ENCODE measurements at regions of chr5 and their contacts with region 1.

Region 1: GRCh38 chr5:68661237-68661636 is 432.6 kb upstream of the SLC30A5 start:
- DNase-seq: peak; percentile 16 to 40 (median 26)
- ATAC-seq: peak; percentile 93
- H3K4me3 ChIP-seq: no peak overlapping the region
- H3K27ac ChIP-seq: no peak overlapping the region
- H3K4me1 ChIP-seq: no peaks in the 10 kb centered on the region
- H3K27me3 ChIP-seq: peaks cover 0 to 7% of the 10 kb centered on the region in 2 experiments; a peak in 2 of 5 replicates
- CTCF ChIP-seq: peak; percentile 49 to 61 (median 51); a peak in 5 of 6 replicates
- EP300 ChIP-seq: no peak
- POLR2A ChIP-seq: no peak
- RAD21 ChIP-seq: peak; percentile 11 to 52; a peak in 2 of 4 replicates

Region 2: GRCh38 chr5:68215208-68215897 is 445.9 kb before region 1 on chr5 and contains the start of gene PIK3R1:
- CTCF ChIA-PET with region 1: no interaction called
- POLR2A ChIA-PET with region 1: no interaction called
- in situ Hi-C with region 1: no loop called
- intact Hi-C with region 1: no loop called
- DNase-seq: peak; percentile 93 to 95 (median 94)
- ATAC-seq: peak; percentile 95
- H3K4me3 ChIP-seq: peak within 1 kb of the TSS; percentile 83
- H3K27ac ChIP-seq: peak within 1 kb of the TSS; percentile 72
- H3K4me1 ChIP-seq: peaks cover 9 to 16% of the 10 kb centered on the region in 2 experiments; a peak in 3 of 5 replicates
- H3K27me3 ChIP-seq: no peaks in the 10 kb centered on the region; a peak in 1 of 5 replicates
- CTCF ChIP-seq: peak in 2 of 3 experiments; percentile 32 to 44; a peak in 2 of 6 replicates
- EP300 ChIP-seq: no peak
- POLR2A ChIP-seq: peak; percentile 62; the same call in 1 of the 2 replicates
- RAD21 ChIP-seq: peak in 1 of 2 experiments; percentile 4; a peak in 1 of 4 replicates
- polyA plus RNA-seq, gene PIK3R1: 1.1 to 1.8 TPM

Region 3: DNA sequence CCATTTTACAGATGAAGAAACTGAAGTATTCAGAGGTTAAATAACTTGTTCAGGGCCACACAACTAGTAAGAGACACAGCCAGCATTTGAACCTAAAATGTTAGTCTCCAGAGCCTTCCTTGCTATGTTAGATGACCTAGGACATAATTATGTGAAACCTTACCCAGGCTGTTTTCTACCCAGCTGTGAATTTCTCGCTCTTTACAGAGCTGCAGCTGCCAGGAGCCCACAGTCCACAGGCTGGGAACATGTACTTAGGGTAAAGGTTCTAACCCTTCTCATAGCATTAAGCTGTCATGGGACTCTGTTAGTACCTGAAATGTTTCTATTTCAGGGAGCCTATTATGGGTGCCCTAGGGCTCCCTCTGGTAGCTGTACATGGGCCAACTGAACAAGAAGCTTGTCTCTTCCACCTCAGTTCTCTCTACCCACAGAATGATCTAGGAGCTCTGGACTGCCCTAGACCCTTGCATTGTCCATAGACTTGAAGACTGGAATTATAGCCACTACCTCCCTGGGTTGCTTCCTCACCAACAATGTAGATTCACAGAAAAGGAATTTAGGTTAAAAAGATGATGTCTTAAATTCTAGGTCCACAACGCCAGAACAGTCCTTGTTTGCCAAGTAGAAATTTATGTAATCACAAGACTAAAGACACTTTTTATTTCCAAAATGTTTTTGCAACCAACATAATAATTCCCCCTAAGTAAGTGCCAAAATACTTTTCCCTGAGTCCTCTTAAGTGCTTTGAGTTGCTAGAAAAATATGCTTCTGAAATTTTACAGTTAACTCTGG is 182.7 kb before region 1 on chr5:
- CTCF ChIA-PET with region 1: no interaction called
- POLR2A ChIA-PET with region 1: interaction called, 3 read pairs
- in situ Hi-C with region 1: no loop called
- intact Hi-C with region 1: loop called (anchors 10 kb)
- DNase-seq: no peak
- ATAC-seq: no peak
- H3K4me3 ChIP-seq: no peak overlapping the region
- H3K27ac ChIP-seq: no peak overlapping the region
- H3K4me1 ChIP-seq: peaks cover 0 to 19% of the 10 kb centered on the region in 2 experiments; a peak in 3 of 5 replicates
- H3K27me3 ChIP-seq: no peaks in the 10 kb centered on the region
- CTCF ChIP-seq: no peak
- EP300 ChIP-seq: no peak
- POLR2A ChIP-seq: no peak
- RAD21 ChIP-seq: no peak

Region 4: DNA sequence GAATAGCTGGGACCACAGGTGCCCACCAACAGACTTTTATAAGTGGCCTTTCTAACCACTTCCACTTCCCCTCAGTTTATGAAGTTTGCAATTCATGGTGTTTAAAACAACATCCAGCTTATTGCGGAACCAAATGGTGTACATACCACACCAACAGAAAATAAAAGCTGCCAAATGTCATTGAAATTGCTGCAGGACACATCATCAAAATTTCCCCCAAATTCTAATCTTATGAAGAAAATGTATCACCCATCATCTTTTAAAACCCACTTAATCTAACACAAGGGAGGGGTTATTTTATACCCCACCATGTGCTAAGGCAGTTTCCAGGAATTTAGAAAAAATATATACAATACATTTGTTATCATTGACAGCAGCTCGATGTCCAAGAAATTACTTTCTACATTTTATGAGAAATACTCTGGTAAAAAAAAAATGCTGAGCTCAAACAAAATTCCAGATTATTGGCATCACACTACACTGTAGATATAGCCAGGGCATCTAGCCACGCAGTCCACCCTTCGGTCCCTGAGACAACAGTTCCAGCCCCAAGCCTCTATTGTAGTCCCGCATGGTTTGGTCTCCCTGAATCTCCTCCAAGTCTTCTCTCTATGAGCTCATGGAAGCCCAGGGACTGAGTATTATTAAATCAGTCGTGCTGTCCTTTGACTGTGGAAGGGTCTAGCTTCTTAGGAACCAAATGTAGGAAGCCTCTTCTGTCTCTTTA is 59.8 kb after region 1 on chr5:
- CTCF ChIA-PET with region 1: no interaction called
- POLR2A ChIA-PET with region 1: no interaction called
- in situ Hi-C with region 1: no loop called
- intact Hi-C with region 1: no loop called
- DNase-seq: no peak
- ATAC-seq: no peak
- H3K4me3 ChIP-seq: no peak overlapping the region
- H3K27ac ChIP-seq: no peak overlapping the region
- H3K4me1 ChIP-seq: no peaks in the 10 kb centered on the region
- H3K27me3 ChIP-seq: peaks cover 0 to under 1% of the 10 kb centered on the region in 2 experiments; a peak in 2 of 5 replicates
- CTCF ChIP-seq: no peak
- EP300 ChIP-seq: no peak
- POLR2A ChIP-seq: no peak
- RAD21 ChIP-seq: no peak